ENCODE measurements at regions of chr9 and their contacts with region 1.

Region 1: DNA sequence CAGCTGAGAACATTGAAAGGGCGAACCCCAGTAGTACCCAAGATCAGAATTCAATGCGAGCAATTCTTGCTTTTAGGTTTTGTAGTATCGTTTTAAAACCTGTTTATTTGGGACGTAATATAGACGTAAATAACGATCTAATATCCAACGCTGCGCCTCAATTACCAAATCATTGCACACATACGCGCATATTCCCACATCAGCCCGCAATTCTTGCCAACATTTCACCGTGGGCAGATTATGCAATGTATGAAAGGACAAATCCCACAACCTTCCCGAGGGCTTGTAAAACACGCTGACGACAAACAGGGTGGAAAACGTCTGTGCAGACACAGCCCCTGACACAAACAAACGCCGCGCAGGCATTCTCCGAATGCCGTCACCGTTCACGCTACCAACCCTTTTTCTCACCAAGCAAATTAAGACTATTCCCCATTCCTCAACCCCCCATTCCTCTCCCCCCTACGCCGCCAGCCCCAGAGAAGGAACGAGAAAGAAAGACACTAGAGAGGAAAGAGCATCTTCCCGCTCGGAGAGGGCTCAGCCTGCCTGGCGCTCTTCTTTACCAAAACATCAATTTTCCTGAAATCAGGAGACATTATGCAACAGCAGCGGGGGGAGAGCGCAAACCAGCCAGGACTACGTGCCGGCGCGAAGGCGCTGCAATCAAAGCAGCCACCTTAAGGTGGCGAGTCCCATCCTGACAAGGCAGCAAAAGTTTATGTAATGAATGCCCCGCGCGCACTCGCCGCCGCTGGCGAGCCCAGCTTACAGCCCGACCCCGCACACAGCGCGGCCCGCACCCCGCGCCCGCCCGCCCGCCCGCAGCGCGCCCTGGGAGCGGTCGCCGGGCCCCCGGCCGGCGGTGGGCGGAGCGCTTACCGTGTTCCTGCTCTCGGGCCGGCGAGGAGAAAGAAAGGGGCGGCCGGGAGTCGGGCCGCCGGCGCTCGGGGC is 597 bp downstream of the NFIL3 start:
- DNase-seq: peak; percentile 36 to 95 (median 58)

Region 2: DNA sequence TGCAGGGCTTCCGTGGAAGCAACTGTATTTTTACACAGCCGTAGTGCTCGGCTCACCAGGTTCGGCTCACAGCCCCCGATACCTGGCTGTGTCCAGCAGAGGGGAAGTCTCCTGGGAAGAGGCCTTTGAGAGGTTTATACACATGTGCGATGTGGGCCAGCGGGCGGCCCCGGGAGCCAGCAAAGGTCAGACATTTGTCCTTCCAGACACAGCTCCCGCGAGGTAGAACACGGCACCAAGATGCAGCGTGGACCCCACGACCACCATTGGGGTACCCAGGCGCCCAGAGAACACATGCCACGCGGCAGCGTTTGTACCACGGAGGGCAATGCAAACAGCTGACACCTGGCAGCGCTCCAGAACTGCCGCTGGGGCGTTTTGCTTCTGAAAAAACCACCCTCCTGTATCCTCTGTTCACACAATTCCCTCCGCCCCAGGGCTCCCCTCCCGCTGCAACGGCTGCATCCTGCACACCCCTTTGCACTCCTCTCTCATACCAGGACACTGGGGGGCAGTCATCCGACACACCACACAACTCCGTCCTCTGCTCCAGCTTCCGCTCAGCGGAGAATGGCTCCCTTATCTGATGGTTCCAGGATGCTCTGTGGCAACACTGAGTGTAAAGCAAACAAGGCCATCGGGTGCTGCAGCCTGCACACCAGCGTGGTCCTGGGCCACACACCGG is 386.1 kb before region 1 on chr9:
- intact Hi-C with region 1: loop called (anchors 2 kb)
- DNase-seq: peak; percentile 64 to 97 (median 82)

Region 3: GRCh38 chr9:91193658-91194391 is 229.2 kb before region 1 on chr9:
- intact Hi-C with region 1: loop called (anchors 10 kb)
- DNase-seq: peak; percentile 40 to 92 (median 64)

Region 4: GRCh38 chr9:91361291-91362050 is 61.6 kb before region 1 on chr9 and contains the start of gene AUH:
- intact Hi-C with region 1: loop called (anchors 2 kb)
- DNase-seq: peak; percentile 76 to 98 (median 84)

Measured in posterior cingulate gyrus (tissue), 11 donors.